Dorsolateral prefrontal cortex (tissue), 120 donors: ENCODE measurements at regions of chr11 and their contacts with region 1.

Region 1: GRCh38 chr11:1050581-1051355 is 14.2 kb upstream of the MUC6 start:
- DNase-seq: peak; percentile 48 to 82 (median 64)
- H3K4me3 ChIP-seq: no peak overlapping the region
- H3K27ac ChIP-seq: no peak overlapping the region
- H3K27me3 ChIP-seq: peaks cover 0 to 74% (median 32%) of the 10 kb centered on the region in 45 donors
- CTCF ChIP-seq: peak; percentile 33 to 88 (median 82)

Region 2: GRCh38 chr11:848380-848931 is 202.3 kb before region 1 on chr11:
- intact Hi-C with region 1: loop called (anchors 2 to 5 kb)
- DNase-seq: peak in 2 of 10 donors; percentile 62 to 67
- H3K4me3 ChIP-seq: peak overlapping the region in 10 of 59 donors; percentile 8 to 67 (median 59)
- H3K27ac ChIP-seq: no peak overlapping the region
- H3K27me3 ChIP-seq: peaks cover 0 to 38% (median 25%) of the 10 kb centered on the region in 45 donors
- CTCF ChIP-seq: peak; percentile 21 to 90 (median 82)

Region 3: DNA sequence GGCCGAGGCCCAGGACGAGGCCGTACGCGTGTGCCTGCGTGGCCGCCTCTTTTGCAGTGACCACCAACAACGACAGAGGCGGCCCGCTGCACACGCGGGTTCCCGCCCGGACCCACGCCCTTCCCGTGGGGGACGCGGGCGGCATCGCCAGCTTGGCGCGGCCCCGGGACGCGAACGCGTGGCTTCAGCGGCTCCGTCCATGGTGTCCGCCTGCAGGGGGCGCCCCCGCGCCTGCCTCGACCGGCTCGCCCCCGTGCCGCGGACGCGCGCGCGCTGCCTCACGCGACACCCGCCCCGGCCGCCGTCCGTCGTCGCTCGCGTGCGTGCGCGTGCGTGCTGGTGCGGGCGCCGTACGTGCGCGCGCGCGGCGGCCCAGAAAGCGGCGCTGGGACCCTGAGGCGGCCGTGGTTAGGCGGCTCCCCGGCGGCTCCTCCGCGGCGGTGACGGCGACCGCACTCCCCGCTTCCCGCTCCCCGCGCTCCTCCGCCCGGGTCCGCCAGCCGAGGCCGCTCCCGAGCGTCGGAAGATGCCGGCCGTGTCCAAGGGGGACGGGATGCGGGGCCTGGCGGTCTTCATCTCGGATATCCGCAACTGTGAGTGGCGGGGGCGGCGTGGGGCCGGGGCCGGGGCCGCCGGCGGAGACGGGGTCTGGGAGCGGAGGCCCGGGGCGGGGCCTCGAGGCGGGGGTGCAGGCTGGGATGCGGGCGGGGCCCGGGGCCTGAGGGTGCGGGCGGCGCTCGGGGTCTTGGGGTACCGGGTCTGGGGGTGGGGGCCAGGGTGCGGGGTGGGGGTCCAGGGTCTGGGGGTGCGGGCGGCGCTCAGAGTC is 125.1 kb before region 1 on chr11 and contains the start of gene AP2A2:
- intact Hi-C with region 1: loop called in 1 of 2 experiments (anchors 10 kb)
- DNase-seq: peak; percentile 57 to 90 (median 80)
- H3K4me3 ChIP-seq: peak within 1 kb of the TSS; percentile 54 to 86 (median 75)
- H3K27ac ChIP-seq: peak within 1 kb of the TSS in 58 of 59 donors; percentile 24 to 94 (median 81)
- H3K27me3 ChIP-seq: no peaks in the 10 kb centered on the region
- CTCF ChIP-seq: peak in 55 of 56 donors; percentile 39 to 89 (median 76)
- total RNA-seq, gene AP2A2: 90.2 to 214 (median 158) TPM